ENCODE measurements at regions of chr2 and their contacts with region 1.

Region 1: DNA sequence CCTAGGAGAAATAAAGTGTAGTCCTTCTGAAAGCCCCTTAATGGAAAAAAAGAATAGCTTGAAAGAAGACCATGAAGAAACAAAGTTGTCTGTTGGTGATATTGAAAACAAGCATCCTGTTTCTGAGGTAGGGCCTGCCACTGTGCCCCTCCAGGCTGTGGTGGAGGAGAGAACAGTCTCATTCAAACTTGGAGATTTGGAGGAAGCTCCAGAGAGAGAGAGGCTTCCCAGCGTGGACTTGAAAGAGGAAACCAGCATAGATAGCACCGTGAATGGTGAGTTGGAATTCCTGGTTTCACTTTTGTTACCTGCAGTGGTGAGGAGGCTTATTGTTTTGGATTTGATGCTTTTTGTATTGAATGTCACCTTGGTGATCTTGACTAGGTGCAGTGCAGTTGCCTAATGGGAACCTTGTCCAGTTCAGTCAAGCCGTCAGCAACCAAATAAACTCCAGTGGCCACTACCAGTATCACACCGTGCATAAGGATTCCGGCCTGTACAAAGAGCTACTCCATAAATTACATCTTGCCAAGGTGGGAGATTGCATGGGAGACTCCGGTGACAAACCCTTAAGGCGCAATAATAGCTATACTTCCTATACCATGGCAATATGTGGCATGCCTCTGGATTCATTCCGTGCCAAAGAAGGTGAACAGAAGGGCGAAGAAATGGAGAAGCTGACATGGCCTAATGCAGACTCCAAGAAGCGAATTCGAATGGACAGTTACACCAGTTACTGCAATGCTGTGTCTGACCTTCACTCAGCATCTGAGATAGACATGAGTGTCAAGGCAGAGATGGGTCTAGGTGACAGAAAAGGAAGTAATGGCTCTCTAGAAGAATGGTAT is 13.3 kb downstream of the SLC20A1 start:
- DNase-seq: no peak
- ATAC-seq: no peak
- H3K4me3 ChIP-seq: peak overlapping the region; percentile 6; the same call in 1 of the 2 replicates
- H3K27ac ChIP-seq: no peak overlapping the region; the same call in 1 of the 2 replicates
- H3K4me1 ChIP-seq: peaks cover 21% of the 10 kb centered on the region
- H3K27me3 ChIP-seq: no peaks in the 10 kb centered on the region
- CTCF ChIP-seq: no peak
- EP300 ChIP-seq: no peak
- POLR2A ChIP-seq: no peak; the same call in 1 of the 2 replicates
- RAD21 ChIP-seq: no peak

Region 2: DNA sequence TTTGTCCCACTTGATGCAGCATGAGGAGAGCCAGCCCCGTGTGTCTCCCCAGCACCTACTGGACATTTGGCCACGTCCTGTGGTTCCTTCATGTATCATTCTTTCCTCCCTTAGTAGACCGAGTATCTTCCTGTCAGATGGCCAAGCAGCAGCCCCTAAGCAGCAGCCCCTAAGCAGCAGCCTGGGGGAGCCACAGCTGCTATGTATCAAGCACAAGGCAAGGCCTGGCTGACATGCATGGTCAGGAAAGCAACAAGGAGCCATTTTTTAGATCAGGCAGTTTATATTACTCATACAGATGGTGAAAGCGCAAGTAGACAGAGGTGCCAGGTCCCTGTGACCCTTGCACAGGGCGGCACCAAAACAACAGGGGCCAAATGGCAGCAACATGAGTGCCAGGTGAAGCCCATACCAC is 52.5 kb before region 1 on chr2:
- CTCF ChIA-PET with region 1: no interaction called
- POLR2A ChIA-PET with region 1: interaction called, 17 read pairs
- RAD21 ChIA-PET with region 1: no interaction called
- SMC1A ChIA-PET with region 1: no interaction called
- in situ Hi-C with region 1: no loop called
- intact Hi-C with region 1: no loop called
- DNase-seq: no peak
- ATAC-seq: peak; percentile 20; the same call in 1 of the 3 replicates
- H3K4me3 ChIP-seq: no peak overlapping the region
- H3K27ac ChIP-seq: no peak overlapping the region
- H3K4me1 ChIP-seq: no peaks in the 10 kb centered on the region
- H3K27me3 ChIP-seq: no peaks in the 10 kb centered on the region
- CTCF ChIP-seq: no peak
- EP300 ChIP-seq: no peak
- POLR2A ChIP-seq: no peak
- RAD21 ChIP-seq: no peak

Region 3: DNA sequence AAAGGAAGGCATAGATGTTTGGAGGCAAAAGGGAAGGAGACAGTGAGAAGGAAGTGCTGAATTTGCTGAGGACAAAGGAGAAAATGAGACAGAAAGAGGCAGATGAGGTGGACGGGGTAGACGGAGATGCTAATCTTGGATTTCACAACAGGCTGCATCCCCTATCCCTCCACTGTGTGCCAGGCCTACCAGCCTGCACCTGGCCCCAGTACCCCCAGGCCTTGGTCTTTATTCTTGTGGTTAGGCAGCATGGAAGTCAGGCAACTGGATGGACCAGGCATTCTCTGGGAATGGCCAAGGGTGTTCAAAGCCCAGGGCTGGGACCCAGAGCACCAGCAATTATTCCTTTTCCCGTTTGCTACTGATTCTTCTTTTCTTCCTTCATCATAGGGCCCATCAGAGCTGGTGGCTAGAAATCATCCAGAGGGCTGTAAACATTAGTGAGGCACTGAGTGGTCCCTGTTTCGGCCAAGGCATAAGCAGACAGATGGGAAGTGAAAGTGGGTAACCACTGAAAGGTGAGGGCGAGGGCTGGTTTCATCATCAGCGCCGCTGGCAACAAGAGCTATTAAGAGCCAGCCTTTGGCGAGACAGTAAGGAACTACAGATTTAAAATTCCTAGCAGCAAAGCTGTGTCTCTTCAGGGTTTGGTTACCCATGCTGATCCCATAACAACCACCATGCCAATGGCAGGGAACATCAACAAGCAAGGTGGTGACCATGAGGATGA is 22.6 kb before region 1 on chr2:
- CTCF ChIA-PET with region 1: interaction called, 4 read pairs
- POLR2A ChIA-PET with region 1: interaction called, 10 read pairs
- RAD21 ChIA-PET with region 1: interaction called, 4 read pairs
- SMC1A ChIA-PET with region 1: interaction called, 17 read pairs
- in situ Hi-C with region 1: no loop called
- intact Hi-C with region 1: no loop called
- DNase-seq: no peak
- ATAC-seq: peak; percentile 94
- H3K4me3 ChIP-seq: no peak overlapping the region
- H3K27ac ChIP-seq: no peak overlapping the region
- H3K4me1 ChIP-seq: peaks cover 32% of the 10 kb centered on the region
- H3K27me3 ChIP-seq: peaks cover 0 to 2% of the 10 kb centered on the region in 2 experiments; a peak in 2 of 4 replicates
- CTCF ChIP-seq: no peak
- EP300 ChIP-seq: peak; percentile 72 to 86; a peak in 3 of 4 replicates
- POLR2A ChIP-seq: no peak
- RAD21 ChIP-seq: no peak

Region 4: GRCh38 chr2:112685271-112685884 is 26.3 kb after region 1 on chr2:
- CTCF ChIA-PET with region 1: interaction called, 8 read pairs
- POLR2A ChIA-PET with region 1: interaction called, 6 read pairs
- RAD21 ChIA-PET with region 1: interaction called, 6 read pairs
- SMC1A ChIA-PET with region 1: interaction called, 21 read pairs
- in situ Hi-C with region 1: no loop called
- intact Hi-C with region 1: no loop called
- DNase-seq: no peak
- ATAC-seq: peak; percentile 73
- H3K4me3 ChIP-seq: no peak overlapping the region
- H3K27ac ChIP-seq: no peak overlapping the region
- H3K4me1 ChIP-seq: peaks cover 13% of the 10 kb centered on the region
- H3K27me3 ChIP-seq: no peaks in the 10 kb centered on the region
- CTCF ChIP-seq: peak in 2 of 3 experiments; percentile 4 to 11; a peak in 1 of 6 replicates
- EP300 ChIP-seq: no peak
- POLR2A ChIP-seq: no peak
- RAD21 ChIP-seq: no peak

Region 5: DNA sequence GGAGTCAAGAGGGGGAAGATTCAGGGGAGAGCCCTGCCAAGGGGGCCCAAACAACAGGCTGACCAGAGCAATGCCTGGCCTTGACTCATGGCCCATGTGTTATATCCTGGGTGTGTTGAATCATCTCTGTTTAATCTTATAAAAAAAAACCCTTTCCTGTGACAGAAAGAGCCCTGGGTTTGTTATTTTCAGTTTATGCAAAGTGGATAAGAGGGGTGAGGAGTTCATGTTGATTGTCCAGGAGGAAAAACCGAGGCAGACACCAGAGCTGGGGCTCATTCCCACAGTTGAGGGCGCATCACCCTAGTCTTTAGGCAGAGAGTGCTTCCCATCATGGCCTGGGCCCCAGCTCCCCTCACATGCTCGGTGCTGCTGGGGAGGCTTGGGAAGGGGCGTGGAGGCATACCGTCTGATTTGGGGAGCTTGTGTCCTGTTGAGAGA is 221.1 kb after region 1 on chr2:
- CTCF ChIA-PET with region 1: no interaction called
- POLR2A ChIA-PET with region 1: no interaction called
- RAD21 ChIA-PET with region 1: no interaction called
- SMC1A ChIA-PET with region 1: no interaction called
- in situ Hi-C with region 1: no loop called
- intact Hi-C with region 1: no loop called
- DNase-seq: no peak
- ATAC-seq: peak; percentile 25
- H3K4me3 ChIP-seq: no peak overlapping the region
- H3K27ac ChIP-seq: peak overlapping the region; percentile 75
- H3K4me1 ChIP-seq: peaks cover 29% of the 10 kb centered on the region
- H3K27me3 ChIP-seq: no peaks in the 10 kb centered on the region
- CTCF ChIP-seq: no peak
- EP300 ChIP-seq: no peak
- POLR2A ChIP-seq: no peak
- RAD21 ChIP-seq: no peak